ENCODE measurements at regions of chr18 and their contacts with region 1.

Region 1: DNA sequence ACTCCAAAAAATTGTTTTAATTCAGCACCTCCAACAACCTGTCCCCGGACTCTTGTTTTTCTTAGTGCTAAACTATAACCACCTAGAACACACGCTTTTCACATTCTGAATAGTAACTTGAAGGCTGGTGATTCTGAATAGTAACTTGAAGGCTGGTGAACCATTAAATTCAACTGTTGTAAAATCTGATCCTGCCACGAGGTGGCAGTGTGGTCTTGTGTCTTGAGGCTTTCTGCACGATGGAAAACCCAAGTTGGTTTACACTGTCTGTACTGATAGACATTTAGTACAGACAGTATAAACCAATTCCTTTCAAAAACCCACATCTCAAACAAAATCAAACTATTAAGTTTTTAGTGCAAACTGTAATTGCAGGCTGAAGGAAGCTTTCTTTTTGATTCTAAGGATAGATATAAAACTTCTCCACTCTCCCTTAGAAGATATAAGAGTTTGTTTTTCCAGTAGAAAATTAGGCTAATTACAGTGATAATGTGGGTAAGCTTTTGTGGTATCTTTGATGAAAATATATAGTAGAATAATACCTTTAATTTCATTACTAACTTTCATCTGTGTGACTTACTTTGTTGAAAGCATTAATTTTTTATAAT is 57.6 kb downstream of the VAPA start:
- DNase-seq: peak; percentile 80
- ATAC-seq: peak; percentile 68
- H3K4me3 Mint-ChIP-seq: no peak overlapping the region
- H3K27ac Mint-ChIP-seq: no peak overlapping the region
- H3K4me1 Mint-ChIP-seq: peaks cover 17% of the 10 kb centered on the region
- H3K27me3 Mint-ChIP-seq: peaks cover 28% of the 10 kb centered on the region

Region 2: DNA sequence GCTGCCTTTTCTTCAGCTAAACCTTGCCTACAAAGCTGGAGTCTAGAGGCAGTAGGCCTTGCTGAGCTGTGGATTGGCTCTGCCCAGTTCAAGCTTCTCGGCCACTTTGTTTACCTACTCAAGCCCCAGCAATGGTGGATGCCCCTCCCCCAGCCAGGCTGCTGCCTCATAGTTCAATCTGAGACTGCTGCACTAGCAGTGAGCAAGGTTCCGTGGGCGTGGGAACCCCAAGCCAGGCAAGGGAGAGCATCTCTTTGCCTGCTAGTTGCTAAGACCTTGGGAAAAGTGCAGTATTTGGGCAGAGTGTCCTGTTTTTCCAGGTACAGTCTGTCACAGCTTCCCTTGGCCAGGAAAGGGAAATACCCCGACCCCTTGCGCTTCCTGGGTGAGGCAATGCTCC is 11.3 kb after region 1 on chr18:
- CTCF ChIA-PET with region 1: interaction called, 10 read pairs
- POLR2A ChIA-PET with region 1: interaction called, 3 read pairs
- intact Hi-C with region 1: no loop called
- DNase-seq: peak; percentile 41
- ATAC-seq: no peak
- H3K4me3 Mint-ChIP-seq: no peak overlapping the region
- H3K27ac Mint-ChIP-seq: no peak overlapping the region
- H3K4me1 Mint-ChIP-seq: no peaks in the 10 kb centered on the region
- H3K27me3 Mint-ChIP-seq: peaks cover 7% of the 10 kb centered on the region

Region 3: GRCh38 chr18:10787293-10787901 is 816.0 kb after region 1 on chr18:
- CTCF ChIA-PET with region 1: no interaction called
- POLR2A ChIA-PET with region 1: no interaction called
- intact Hi-C with region 1: loop called in 1 of 2 experiments (anchors 10 kb)
- DNase-seq: peak; percentile 95
- ATAC-seq: peak; percentile 89
- H3K4me3 Mint-ChIP-seq: no peak overlapping the region
- H3K27ac Mint-ChIP-seq: no peak overlapping the region
- H3K4me1 Mint-ChIP-seq: peaks cover 4% of the 10 kb centered on the region
- H3K27me3 Mint-ChIP-seq: peaks cover 39% of the 10 kb centered on the region

Region 4: GRCh38 chr18:11040823-11041656 is 1069.6 kb after region 1 on chr18:
- CTCF ChIA-PET with region 1: no interaction called
- POLR2A ChIA-PET with region 1: no interaction called
- intact Hi-C with region 1: loop called (anchors 5 kb)
- DNase-seq: peak; percentile 36
- ATAC-seq: no peak
- H3K4me3 Mint-ChIP-seq: no peak overlapping the region
- H3K27ac Mint-ChIP-seq: no peak overlapping the region
- H3K4me1 Mint-ChIP-seq: no peaks in the 10 kb centered on the region
- H3K27me3 Mint-ChIP-seq: peaks cover 5% of the 10 kb centered on the region

Region 5: GRCh38 chr18:11553098-11553940 is 1581.9 kb after region 1 on chr18:
- CTCF ChIA-PET with region 1: no interaction called
- POLR2A ChIA-PET with region 1: no interaction called
- intact Hi-C with region 1: loop called in 1 of 2 experiments (anchors 5 kb)
- DNase-seq: peak; percentile 51
- ATAC-seq: peak; percentile 61
- H3K4me3 Mint-ChIP-seq: no peak overlapping the region
- H3K27ac Mint-ChIP-seq: no peak overlapping the region
- H3K4me1 Mint-ChIP-seq: no peaks in the 10 kb centered on the region
- H3K27me3 Mint-ChIP-seq: peaks cover 2% of the 10 kb centered on the region